ENCODE measurements at regions of chr3 and their contacts with region 1.

Region 1: GRCh38 chr3:65439641-65440284 is 599.0 kb downstream of the MAGI1 start:
- DNase-seq: peak; percentile 35
- H3K4me3 ChIP-seq: no peak overlapping the region
- H3K27ac ChIP-seq: no peak overlapping the region
- H3K4me1 ChIP-seq: peaks cover 7% of the 10 kb centered on the region
- H3K27me3 ChIP-seq: no peaks in the 10 kb centered on the region
- CTCF ChIP-seq: peak; percentile 77

Region 2: GRCh38 chr3:65233559-65233958 is 206.2 kb before region 1 on chr3:
- intact Hi-C with region 1: no loop called
- DNase-seq: no peak
- H3K4me3 ChIP-seq: no peak overlapping the region
- H3K27ac ChIP-seq: no peak overlapping the region
- H3K4me1 ChIP-seq: no peaks in the 10 kb centered on the region
- H3K27me3 ChIP-seq: no peaks in the 10 kb centered on the region
- CTCF ChIP-seq: no peak

Region 3: GRCh38 chr3:65672871-65673815 is 233.4 kb after region 1 on chr3:
- intact Hi-C with region 1: loop called (anchors 5 kb)
- DNase-seq: peak; percentile 58
- H3K4me3 ChIP-seq: no peak overlapping the region
- H3K27ac ChIP-seq: no peak overlapping the region
- H3K4me1 ChIP-seq: peaks cover 5% of the 10 kb centered on the region
- H3K27me3 ChIP-seq: no peaks in the 10 kb centered on the region
- CTCF ChIP-seq: peak; percentile 87

Region 4: GRCh38 chr3:65732051-65732935 is 292.5 kb after region 1 on chr3:
- intact Hi-C with region 1: loop called (anchors 5 kb)
- DNase-seq: no peak
- H3K4me3 ChIP-seq: no peak overlapping the region
- H3K27ac ChIP-seq: no peak overlapping the region
- H3K4me1 ChIP-seq: peaks cover 34% of the 10 kb centered on the region
- H3K27me3 ChIP-seq: no peaks in the 10 kb centered on the region
- CTCF ChIP-seq: peak; percentile 85

Measured in left ventricle myocardium inferior (tissue), 1 donor.